CD4-positive, alpha-beta T cell (primary cell): ENCODE measurements at regions of chr19 and their contacts with region 1.

Region 1: DNA sequence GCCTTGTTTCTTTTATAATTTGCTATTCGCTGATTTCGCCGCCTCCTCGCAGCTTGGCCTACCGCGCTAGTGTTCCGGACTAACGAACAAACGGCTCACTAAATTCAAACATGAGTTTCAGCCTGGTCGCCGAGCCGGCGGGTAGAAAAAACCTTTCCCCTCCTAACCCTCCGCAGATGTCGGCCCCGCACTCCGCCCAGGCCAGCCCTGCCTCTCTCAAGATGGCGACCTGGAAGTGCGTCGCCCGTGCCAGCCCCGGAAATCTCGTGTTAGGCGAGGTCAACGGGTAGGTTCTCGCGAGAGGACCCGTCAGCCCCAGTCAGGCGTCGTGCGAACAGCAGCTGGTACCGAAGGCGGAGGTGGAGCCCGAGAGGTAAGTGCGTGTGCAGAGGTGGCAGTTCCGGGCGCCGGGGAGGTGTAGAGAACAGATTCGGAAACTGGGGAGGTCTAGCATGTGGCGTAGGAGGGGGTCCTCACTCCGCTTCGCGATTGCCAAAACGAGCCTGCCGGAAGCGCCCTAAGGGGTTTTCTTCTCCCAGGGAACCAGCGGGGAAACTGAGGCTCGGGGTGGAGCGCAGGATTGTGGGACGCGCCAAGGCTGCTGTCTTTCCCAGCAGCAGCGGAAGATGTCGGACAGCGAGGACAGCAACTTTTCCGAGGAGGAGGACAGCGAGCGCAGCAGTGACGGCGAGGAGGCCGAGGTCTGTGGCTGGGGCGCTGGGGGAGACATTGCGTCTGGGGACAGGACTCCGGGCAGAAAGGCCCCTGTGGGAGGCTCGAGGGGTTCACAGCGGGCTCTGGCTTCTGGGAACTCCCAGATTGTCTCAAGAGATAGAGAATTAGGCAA is at the start of gene SUPT5H:
- DNase-seq: peak; percentile 94 to 100 (median 97)
- ATAC-seq: peak; percentile 93
- H3K4me3 ChIP-seq: peak within 1 kb of the TSS; percentile 99
- H3K4me3 Mint-ChIP-seq: peak within 1 kb of the TSS; percentile 98
- H3K27ac ChIP-seq: peak within 1 kb of the TSS; percentile 89 to 94
- H3K27ac Mint-ChIP-seq: peak within 1 kb of the TSS; percentile 91
- H3K4me1 ChIP-seq: peaks cover 54% of the 10 kb centered on the region
- H3K4me1 Mint-ChIP-seq: peaks cover 56% of the 10 kb centered on the region
- H3K27me3 ChIP-seq: no peaks in the 10 kb centered on the region
- H3K27me3 Mint-ChIP-seq: no peaks in the 10 kb centered on the region
- CTCF ChIP-seq: no peak
- total RNA-seq, gene SUPT5H: 322 to 333 TPM

Region 2: GRCh38 chr19:39335168-39335548 is 110.3 kb before region 1 on chr19:
- CTCF ChIA-PET with region 1: no interaction called
- POLR2A ChIA-PET with region 1: interaction called, 11 read pairs
- intact Hi-C with region 1: no loop called
- DNase-seq: peak in 8 of 14 experiments; percentile 10 to 63 (median 32)
- ATAC-seq: peak; percentile 45
- H3K4me3 ChIP-seq: peak overlapping the region; percentile 99
- H3K4me3 Mint-ChIP-seq: peak overlapping the region; percentile 98
- H3K27ac ChIP-seq: peak overlapping the region; percentile 93 to 94
- H3K27ac Mint-ChIP-seq: peak overlapping the region; percentile 95
- H3K4me1 ChIP-seq: peaks cover 76% of the 10 kb centered on the region
- H3K4me1 Mint-ChIP-seq: peaks cover 65% of the 10 kb centered on the region
- H3K27me3 ChIP-seq: no peaks in the 10 kb centered on the region
- H3K27me3 Mint-ChIP-seq: no peaks in the 10 kb centered on the region
- CTCF ChIP-seq: no peak

Region 3: GRCh38 chr19:39397360-39398296 is 47.9 kb before region 1 on chr19:
- CTCF ChIA-PET with region 1: interaction called, 5 read pairs
- POLR2A ChIA-PET with region 1: interaction called, 15 read pairs
- intact Hi-C with region 1: no loop called
- DNase-seq: peak; percentile 87 to 98 (median 94)
- ATAC-seq: peak; percentile 43
- H3K4me3 ChIP-seq: peak overlapping the region; percentile 31
- H3K4me3 Mint-ChIP-seq: peak overlapping the region; percentile 63
- H3K27ac ChIP-seq: peak overlapping the region; percentile 90 to 100
- H3K27ac Mint-ChIP-seq: peak overlapping the region; percentile 98
- H3K4me1 ChIP-seq: peaks cover 68% of the 10 kb centered on the region
- H3K4me1 Mint-ChIP-seq: peaks cover 54% of the 10 kb centered on the region
- H3K27me3 ChIP-seq: no peaks in the 10 kb centered on the region
- H3K27me3 Mint-ChIP-seq: no peaks in the 10 kb centered on the region
- CTCF ChIP-seq: peak; percentile 91

Region 4: GRCh38 chr19:39419003-39419402 is 26.5 kb before region 1 on chr19:
- CTCF ChIA-PET with region 1: no interaction called
- POLR2A ChIA-PET with region 1: no interaction called
- intact Hi-C with region 1: no loop called
- DNase-seq: peak in 2 of 14 experiments; percentile 19 to 41
- ATAC-seq: no peak
- H3K4me3 ChIP-seq: no peak overlapping the region
- H3K4me3 Mint-ChIP-seq: no peak overlapping the region
- H3K27ac ChIP-seq: no peak overlapping the region
- H3K27ac Mint-ChIP-seq: peak overlapping the region; percentile 42
- H3K4me1 ChIP-seq: peaks cover 13% of the 10 kb centered on the region
- H3K4me1 Mint-ChIP-seq: peaks cover 7% of the 10 kb centered on the region
- H3K27me3 ChIP-seq: no peaks in the 10 kb centered on the region
- H3K27me3 Mint-ChIP-seq: no peaks in the 10 kb centered on the region
- CTCF ChIP-seq: no peak

Region 5: GRCh38 chr19:39474139-39474622 is 28.7 kb after region 1 on chr19:
- CTCF ChIA-PET with region 1: interaction called, 12 read pairs
- POLR2A ChIA-PET with region 1: interaction called, 6 read pairs
- intact Hi-C with region 1: no loop called
- DNase-seq: peak; percentile 65 to 85 (median 72)
- ATAC-seq: peak; percentile 85
- H3K4me3 ChIP-seq: no peak overlapping the region
- H3K4me3 Mint-ChIP-seq: no peak overlapping the region
- H3K27ac ChIP-seq: no peak overlapping the region
- H3K27ac Mint-ChIP-seq: peak overlapping the region; percentile 36
- H3K4me1 ChIP-seq: no peaks in the 10 kb centered on the region
- H3K4me1 Mint-ChIP-seq: no peaks in the 10 kb centered on the region
- H3K27me3 ChIP-seq: no peaks in the 10 kb centered on the region
- H3K27me3 Mint-ChIP-seq: no peaks in the 10 kb centered on the region
- CTCF ChIP-seq: peak; percentile 70

Region 6: GRCh38 chr19:39532233-39533002 is 86.9 kb after region 1 on chr19 and contains the start of gene EID2B:
- CTCF ChIA-PET with region 1: interaction called, 3 read pairs
- POLR2A ChIA-PET with region 1: interaction called, 17 read pairs
- intact Hi-C with region 1: loop called (anchors 1 kb)
- DNase-seq: peak; percentile 87 to 99 (median 94)
- ATAC-seq: peak; percentile 95
- H3K4me3 ChIP-seq: peak within 1 kb of the TSS; percentile 79
- H3K4me3 Mint-ChIP-seq: peak within 1 kb of the TSS; percentile 96
- H3K27ac ChIP-seq: peak within 1 kb of the TSS in 1 of 2 donors; percentile 74
- H3K27ac Mint-ChIP-seq: peak within 1 kb of the TSS; percentile 86
- H3K4me1 ChIP-seq: peaks cover 15% of the 10 kb centered on the region
- H3K4me1 Mint-ChIP-seq: peaks cover 39% of the 10 kb centered on the region
- H3K27me3 ChIP-seq: no peaks in the 10 kb centered on the region
- H3K27me3 Mint-ChIP-seq: no peaks in the 10 kb centered on the region
- CTCF ChIP-seq: peak; percentile 97
- total RNA-seq, gene EID2B: 5.0 to 5.1 TPM

Region 7: GRCh38 chr19:40190891-40191835 is 745.7 kb after region 1 on chr19 and contains the start of gene MAP3K10:
- CTCF ChIA-PET with region 1: no interaction called
- POLR2A ChIA-PET with region 1: no interaction called
- intact Hi-C with region 1: loop called in 1 of 2 experiments (anchors 10 kb)
- DNase-seq: peak; percentile 37 to 85 (median 68)
- ATAC-seq: peak; percentile 81
- H3K4me3 ChIP-seq: peak within 1 kb of the TSS; percentile 98
- H3K4me3 Mint-ChIP-seq: peak within 1 kb of the TSS; percentile 95
- H3K27ac ChIP-seq: peak within 1 kb of the TSS; percentile 83 to 89
- H3K27ac Mint-ChIP-seq: peak within 1 kb of the TSS; percentile 88
- H3K4me1 ChIP-seq: peaks cover 31% of the 10 kb centered on the region
- H3K4me1 Mint-ChIP-seq: peaks cover 45% of the 10 kb centered on the region
- H3K27me3 ChIP-seq: no peaks in the 10 kb centered on the region
- H3K27me3 Mint-ChIP-seq: no peaks in the 10 kb centered on the region
- CTCF ChIP-seq: no peak
- total RNA-seq, gene MAP3K10: 20.8 to 21.7 TPM